ENCODE measurements at regions of chr18 and their contacts with region 1.

Region 1: GRCh38 chr18:51287823-51288508 is 90.5 kb upstream of the MEX3C start:
- DNase-seq: no peak
- H3K4me3 ChIP-seq: no peak overlapping the region
- H3K27ac ChIP-seq: no peak overlapping the region
- H3K27me3 ChIP-seq: no peaks in the 10 kb centered on the region
- CTCF ChIP-seq: no peak

Region 2: GRCh38 chr18:51383116-51383515 is 95.2 kb after region 1 on chr18:
- intact Hi-C with region 1: loop called in 1 of 2 experiments (anchors 10 kb)
- DNase-seq: no peak
- H3K4me3 ChIP-seq: no peak overlapping the region
- H3K27ac ChIP-seq: no peak overlapping the region
- H3K27me3 ChIP-seq: no peaks in the 10 kb centered on the region
- CTCF ChIP-seq: peak in 3 of 56 donors; percentile 12 to 17 (median 12)